ENCODE measurements at regions of chr15 and their contacts with region 1.

Region 1: GRCh38 chr15:42495361-42496212 is at the start of gene SNAP23:
- DNase-seq: peak; percentile 66 to 87 (median 80)
- ATAC-seq: peak; percentile 93
- H3K4me3 ChIP-seq: peak within 1 kb of the TSS; percentile 88
- H3K4me3 Mint-ChIP-seq: peak within 1 kb of the TSS; percentile 94 to 99 (median 97)
- H3K27ac ChIP-seq: peak within 1 kb of the TSS; percentile 79
- H3K27ac Mint-ChIP-seq: peak within 1 kb of the TSS; percentile 90 to 99 (median 96)
- H3K4me1 ChIP-seq: peaks cover 14 to 17% of the 10 kb centered on the region in 2 donors
- H3K4me1 Mint-ChIP-seq: peaks cover 43 to 92% (median 80%) of the 10 kb centered on the region in 7 donors
- H3K27me3 ChIP-seq: no peaks in the 10 kb centered on the region
- H3K27me3 Mint-ChIP-seq: peaks cover 0 to 2% (median 0%) of the 10 kb centered on the region in 5 donors
- total RNA-seq, gene SNAP23: 60.0 to 80.0 (median 70.6) TPM

Region 2: GRCh38 chr15:41283653-41284426 is 1211.7 kb before region 1 on chr15:
- CTCF ChIA-PET with region 1: no interaction called
- POLR2A ChIA-PET with region 1: no interaction called
- intact Hi-C with region 1: no loop called
- DNase-seq: peak; percentile 94 to 98 (median 97)
- ATAC-seq: peak; percentile 98
- H3K4me3 ChIP-seq: peak overlapping the region; percentile 89
- H3K4me3 Mint-ChIP-seq: peak overlapping the region; percentile 90 to 100 (median 92)
- H3K27ac ChIP-seq: peak overlapping the region; percentile 91
- H3K27ac Mint-ChIP-seq: peak overlapping the region; percentile 96 to 99 (median 97)
- H3K4me1 ChIP-seq: peaks cover 21 to 31% of the 10 kb centered on the region in 2 donors
- H3K4me1 Mint-ChIP-seq: peaks cover 22 to 54% (median 51%) of the 10 kb centered on the region in 7 donors
- H3K27me3 ChIP-seq: no peaks in the 10 kb centered on the region
- H3K27me3 Mint-ChIP-seq: peaks cover 0 to 2% (median 0%) of the 10 kb centered on the region in 5 donors

Region 3: DNA sequence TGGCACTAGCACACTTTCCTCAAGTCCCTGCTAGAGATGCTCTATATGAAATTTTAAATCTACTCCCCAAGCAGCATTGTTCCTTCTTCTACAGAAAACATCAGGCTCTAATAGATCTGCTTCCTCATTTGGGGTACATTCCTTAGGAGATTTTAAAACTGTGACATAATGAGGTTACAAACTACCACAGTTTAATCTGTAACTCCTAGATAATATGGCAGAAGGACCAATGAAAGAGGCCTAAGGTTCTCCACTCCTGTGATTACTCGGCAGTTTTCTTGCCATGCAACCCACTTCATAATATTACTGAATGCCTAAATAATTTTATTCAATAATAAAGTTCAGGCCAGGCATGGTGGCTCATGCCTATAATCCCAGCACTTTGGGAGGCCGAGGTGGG is 20.8 kb before region 1 on chr15:
- CTCF ChIA-PET with region 1: no interaction called
- POLR2A ChIA-PET with region 1: interaction called, 5 read pairs
- intact Hi-C with region 1: loop called in 1 of 2 experiments (anchors 2 kb)
- DNase-seq: no peak
- ATAC-seq: no peak
- H3K4me3 ChIP-seq: no peak overlapping the region
- H3K4me3 Mint-ChIP-seq: no peak overlapping the region
- H3K27ac ChIP-seq: no peak overlapping the region
- H3K27ac Mint-ChIP-seq: peak overlapping the region in 7 of 9 donors; percentile 13 to 76 (median 54)
- H3K4me1 ChIP-seq: no peaks in the 10 kb centered on the region
- H3K4me1 Mint-ChIP-seq: peaks cover 8 to 44% (median 16%) of the 10 kb centered on the region in 7 donors
- H3K27me3 ChIP-seq: no peaks in the 10 kb centered on the region
- H3K27me3 Mint-ChIP-seq: no peaks in the 10 kb centered on the region

Region 4: DNA sequence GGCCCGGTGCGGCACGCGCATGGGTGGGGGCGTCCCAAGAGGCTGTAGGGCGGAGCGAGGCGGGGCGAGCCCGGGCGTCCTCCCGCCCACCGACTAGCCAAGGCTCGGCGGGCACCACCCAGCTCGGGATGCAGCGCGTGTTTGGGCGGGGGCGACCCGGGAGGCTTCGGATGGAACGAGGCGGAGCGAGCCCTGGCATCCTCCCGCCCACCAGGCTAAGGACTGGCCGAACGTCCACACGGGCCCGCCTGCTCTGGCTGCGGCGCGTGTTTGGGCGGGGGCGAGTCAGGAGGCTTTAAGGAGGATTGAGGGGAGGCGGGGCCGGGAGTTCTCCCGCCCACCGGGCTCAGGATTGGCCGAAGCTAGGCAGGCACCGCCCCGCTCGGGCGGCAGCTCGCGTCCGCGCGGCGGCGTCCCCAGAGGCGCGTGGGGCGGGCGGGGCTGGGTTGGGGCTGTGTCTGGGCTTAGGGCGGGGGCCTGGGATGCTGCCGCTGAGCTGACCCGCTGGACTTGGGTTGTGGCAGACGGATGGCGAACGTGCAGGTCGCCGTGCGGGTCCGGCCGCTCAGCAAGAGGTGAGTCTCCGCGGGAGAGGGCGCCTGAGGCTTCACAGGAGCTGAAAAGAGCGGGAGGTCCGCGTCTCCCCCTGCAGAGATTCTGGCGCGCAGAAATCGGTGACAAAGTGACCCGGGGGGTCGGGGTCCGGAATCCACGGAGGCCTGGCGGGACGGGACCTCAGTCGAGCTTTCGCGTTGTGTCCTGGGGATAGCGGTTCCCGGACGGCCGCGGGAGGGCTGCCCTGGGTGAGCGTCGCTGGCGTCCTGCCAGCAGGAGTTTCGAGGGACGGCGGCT is 79.8 kb after region 1 on chr15 and contains the start of gene STARD9:
- CTCF ChIA-PET with region 1: no interaction called
- POLR2A ChIA-PET with region 1: interaction called, 5 read pairs
- intact Hi-C with region 1: loop called in 1 of 2 experiments (anchors 1 kb)
- DNase-seq: peak; percentile 84 to 96 (median 93)
- ATAC-seq: peak; percentile 96
- H3K4me3 ChIP-seq: peak within 1 kb of the TSS; percentile 81
- H3K4me3 Mint-ChIP-seq: peak within 1 kb of the TSS; percentile 74 to 95 (median 92)
- H3K27ac ChIP-seq: peak within 1 kb of the TSS; percentile 58
- H3K27ac Mint-ChIP-seq: peak within 1 kb of the TSS; percentile 10 to 84 (median 76)
- H3K4me1 ChIP-seq: peaks cover 7 to 12% of the 10 kb centered on the region in 2 donors
- H3K4me1 Mint-ChIP-seq: peaks cover 14 to 36% (median 19%) of the 10 kb centered on the region in 7 donors
- H3K27me3 ChIP-seq: no peaks in the 10 kb centered on the region
- H3K27me3 Mint-ChIP-seq: peaks cover 6 to 35% (median 13%) of the 10 kb centered on the region in 5 donors
- total RNA-seq, gene STARD9: 2.4 to 10.5 (median 4.5) TPM

Region 5: GRCh38 chr15:42650208-42651066 is 154.8 kb after region 1 on chr15:
- CTCF ChIA-PET with region 1: no interaction called
- POLR2A ChIA-PET with region 1: interaction called, 3 read pairs
- intact Hi-C with region 1: loop called (anchors 5 kb)
- DNase-seq: peak; percentile 19 to 69 (median 59)
- ATAC-seq: peak; percentile 85
- H3K4me3 ChIP-seq: no peak overlapping the region
- H3K4me3 Mint-ChIP-seq: no peak overlapping the region
- H3K27ac ChIP-seq: no peak overlapping the region
- H3K27ac Mint-ChIP-seq: no peak overlapping the region
- H3K4me1 ChIP-seq: no peaks in the 10 kb centered on the region
- H3K4me1 Mint-ChIP-seq: peaks cover 0 to 22% (median 4%) of the 10 kb centered on the region in 7 donors
- H3K27me3 ChIP-seq: no peaks in the 10 kb centered on the region
- H3K27me3 Mint-ChIP-seq: no peaks in the 10 kb centered on the region

Region 6: DNA sequence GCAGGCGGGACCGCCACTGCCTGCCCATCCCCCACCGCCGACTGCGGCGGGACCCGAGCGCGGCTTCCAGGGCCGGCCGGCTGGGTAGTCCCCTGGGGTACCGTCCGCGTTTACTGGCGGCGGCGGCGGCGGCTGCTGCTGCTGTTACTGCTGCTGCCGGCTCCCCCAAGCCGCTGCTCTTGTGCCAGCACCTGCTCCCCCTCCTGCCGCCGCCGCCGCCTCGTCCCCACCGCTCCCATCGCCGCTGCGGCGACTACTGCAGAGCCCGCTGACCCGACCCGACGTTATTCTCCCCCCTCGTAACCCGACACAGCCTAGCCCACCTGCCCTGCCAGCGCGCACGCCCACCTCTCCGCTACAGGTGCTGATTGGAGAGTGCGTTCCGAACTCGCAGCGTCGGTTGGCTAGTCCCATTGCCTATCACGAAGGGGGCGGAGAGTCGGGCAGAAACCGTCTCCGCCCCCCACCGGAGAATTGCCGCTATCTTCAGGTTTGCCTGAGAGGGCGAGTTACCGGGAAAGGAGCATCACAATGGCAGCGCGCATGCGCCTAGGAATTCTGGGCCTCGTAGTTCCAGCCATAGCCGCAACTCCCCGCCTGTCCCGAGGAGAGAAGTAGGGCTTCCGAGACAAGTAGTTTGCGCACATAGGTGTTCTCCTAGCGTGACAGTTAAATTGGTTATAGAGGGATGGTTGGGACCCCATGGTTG is 425.1 kb after region 1 on chr15 and contains the start of gene TTBK2:
- CTCF ChIA-PET with region 1: no interaction called
- POLR2A ChIA-PET with region 1: no interaction called
- intact Hi-C with region 1: loop called (anchors 1 to 5 kb)
- DNase-seq: peak; percentile 93 to 98 (median 97)
- ATAC-seq: peak; percentile 98
- H3K4me3 ChIP-seq: peak within 1 kb of the TSS; percentile 89
- H3K4me3 Mint-ChIP-seq: peak within 1 kb of the TSS; percentile 93 to 100 (median 97)
- H3K27ac ChIP-seq: peak within 1 kb of the TSS; percentile 71
- H3K27ac Mint-ChIP-seq: peak within 1 kb of the TSS; percentile 88 to 97 (median 95)
- H3K4me1 ChIP-seq: peaks cover 4 to 5% of the 10 kb centered on the region in 2 donors
- H3K4me1 Mint-ChIP-seq: peaks cover 14 to 40% (median 29%) of the 10 kb centered on the region in 7 donors
- H3K27me3 ChIP-seq: no peaks in the 10 kb centered on the region
- H3K27me3 Mint-ChIP-seq: peaks cover 0 to 3% (median 0%) of the 10 kb centered on the region in 5 donors
- total RNA-seq, gene TTBK2: 15.7 to 30.5 (median 28.8) TPM

Region 7: DNA sequence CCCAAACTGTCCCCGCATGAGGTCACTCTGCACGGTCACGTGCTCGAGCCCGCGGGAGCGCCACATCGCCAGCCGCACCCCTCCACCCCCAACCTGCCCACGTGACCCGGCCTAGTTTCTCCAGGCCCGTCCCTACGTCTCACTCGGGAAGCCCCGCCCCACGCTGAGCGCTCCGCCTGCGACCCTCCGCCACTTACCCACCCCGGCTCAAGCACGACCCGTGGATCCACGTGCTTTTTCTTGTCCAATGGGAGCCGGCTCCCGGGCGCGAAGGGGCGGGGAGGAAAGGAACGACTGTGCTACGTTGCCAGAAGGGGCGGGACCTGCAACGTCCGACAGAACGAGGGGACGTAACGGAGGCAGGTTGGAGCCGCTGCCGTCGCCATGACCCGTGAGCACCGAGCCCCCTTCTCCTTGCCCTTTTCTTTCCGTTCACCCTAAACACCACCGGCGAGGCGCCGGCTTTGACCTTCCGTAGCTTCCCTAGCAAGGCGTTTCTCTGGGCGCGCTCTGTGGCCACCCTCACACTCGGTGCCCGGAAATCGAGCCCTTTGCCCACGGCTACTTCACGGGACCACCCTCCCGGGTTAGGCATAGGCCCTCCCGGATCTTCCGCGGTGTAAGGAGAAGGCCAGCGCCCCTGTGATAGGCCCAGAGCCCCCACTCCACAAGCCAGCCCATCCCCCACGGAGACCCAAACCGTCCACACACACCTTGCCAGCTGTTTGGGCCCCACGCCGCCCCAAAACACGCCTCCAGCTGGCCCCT is 1296.6 kb after region 1 on chr15 and contains the start of gene SERF2:
- CTCF ChIA-PET with region 1: no interaction called
- POLR2A ChIA-PET with region 1: no interaction called
- intact Hi-C with region 1: loop called in 1 of 2 experiments (anchors 10 kb)
- DNase-seq: peak; percentile 92 to 99 (median 97)
- ATAC-seq: peak; percentile 97
- H3K4me3 ChIP-seq: peak within 1 kb of the TSS; percentile 98
- H3K4me3 Mint-ChIP-seq: peak within 1 kb of the TSS; percentile 93 to 98 (median 96)
- H3K27ac ChIP-seq: peak within 1 kb of the TSS; percentile 100
- H3K27ac Mint-ChIP-seq: peak within 1 kb of the TSS; percentile 91 to 99 (median 98)
- H3K4me1 ChIP-seq: peaks cover 9 to 22% of the 10 kb centered on the region in 2 donors
- H3K4me1 Mint-ChIP-seq: peaks cover 33 to 54% (median 48%) of the 10 kb centered on the region in 7 donors
- H3K27me3 ChIP-seq: no peaks in the 10 kb centered on the region
- H3K27me3 Mint-ChIP-seq: peaks cover 0 to 2% (median 0%) of the 10 kb centered on the region in 5 donors
- total RNA-seq, gene SERF2: 358 to 676 (median 553) TPM

Measured in naive thymus-derived CD4-positive, alpha-beta T cell (primary cell).